ENCODE measurements at regions of chr12 and their contacts with region 1.

Region 1: DNA sequence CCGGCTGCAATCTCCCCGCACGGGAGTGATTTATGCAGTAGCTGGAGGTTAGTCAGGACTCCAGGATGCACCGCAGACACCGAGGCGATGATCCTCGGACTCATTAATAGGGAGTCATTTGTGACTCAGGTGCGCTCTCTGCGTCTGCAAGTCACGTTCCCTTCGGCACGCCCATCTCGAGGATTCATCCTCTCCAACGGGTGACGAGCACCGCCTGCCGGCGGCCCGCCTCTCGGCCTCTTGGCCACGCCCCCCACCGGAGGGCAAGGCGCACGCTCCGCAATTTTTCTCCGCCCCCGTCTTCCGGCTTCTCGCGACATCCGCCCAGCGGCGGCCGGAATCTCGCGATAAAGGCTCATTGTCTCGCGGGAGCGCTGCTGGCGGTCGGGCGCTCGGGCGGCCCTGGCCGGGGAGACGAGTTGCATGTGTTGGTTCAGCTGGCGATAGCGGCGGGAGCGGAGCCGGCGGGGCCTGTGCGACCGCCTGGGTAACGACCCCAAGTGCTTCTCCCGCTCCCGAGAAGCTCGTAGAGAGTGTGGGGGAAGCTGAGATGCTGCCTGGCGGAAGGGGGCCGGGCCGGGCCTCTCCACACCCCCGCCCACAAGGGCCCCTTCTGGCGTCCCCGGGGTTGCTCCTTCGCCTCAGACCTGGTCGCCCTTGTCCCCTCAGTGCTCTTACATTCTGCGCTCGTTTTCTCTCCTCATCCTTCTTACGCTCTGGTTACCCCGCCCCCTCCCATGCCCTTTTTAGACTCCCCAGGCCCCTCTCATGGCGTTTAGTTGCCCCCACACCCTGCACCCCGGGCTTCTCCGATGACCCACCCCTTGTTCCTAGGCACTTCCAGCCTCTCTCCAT is at the start of gene DENR:
- DNase-seq: peak; percentile 98 to 99
- H3K4me3 ChIP-seq: peak within 1 kb of the TSS; percentile 69
- H3K4me3 Mint-ChIP-seq: peak within 1 kb of the TSS; percentile 97
- H3K27ac Mint-ChIP-seq: peak within 1 kb of the TSS; percentile 93
- H3K4me1 ChIP-seq: peaks cover 31% of the 10 kb centered on the region
- H3K4me1 Mint-ChIP-seq: peaks cover 37% of the 10 kb centered on the region
- H3K27me3 ChIP-seq: no peaks in the 10 kb centered on the region
- H3K27me3 Mint-ChIP-seq: no peaks in the 10 kb centered on the region
- CTCF ChIP-seq: peak; percentile 78 to 93
- total RNA-seq, gene DENR: 83.2 and 83.8 TPM in 2 replicates

Region 2: DNA sequence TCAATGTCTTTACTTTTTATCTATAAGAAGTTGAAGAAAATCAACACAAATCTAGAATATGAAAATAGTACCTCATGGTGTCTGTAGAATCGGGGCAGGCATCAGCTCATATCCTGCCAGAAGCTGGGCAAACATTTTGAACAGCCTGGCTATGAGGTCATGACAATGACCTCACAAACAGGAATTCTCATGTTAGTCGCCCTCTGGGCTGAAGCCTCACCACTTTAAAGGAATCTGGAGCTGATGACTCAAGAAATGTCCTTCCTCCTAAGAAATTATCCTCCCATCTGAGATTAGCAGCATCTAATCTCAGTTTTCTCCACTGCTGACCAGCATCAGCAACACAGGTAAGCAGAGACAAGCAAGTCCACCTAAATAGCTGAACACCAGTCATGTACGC is 357.4 kb before region 1 on chr12:
- CTCF ChIA-PET with region 1: no interaction called
- POLR2A ChIA-PET with region 1: no interaction called
- intact Hi-C with region 1: no loop called
- DNase-seq: no peak
- H3K4me3 ChIP-seq: no peak overlapping the region
- H3K4me3 Mint-ChIP-seq: no peak overlapping the region
- H3K27ac Mint-ChIP-seq: peak overlapping the region; percentile 64
- H3K4me1 ChIP-seq: peaks cover 26% of the 10 kb centered on the region
- H3K4me1 Mint-ChIP-seq: peaks cover 16% of the 10 kb centered on the region
- H3K27me3 ChIP-seq: no peaks in the 10 kb centered on the region
- H3K27me3 Mint-ChIP-seq: no peaks in the 10 kb centered on the region
- CTCF ChIP-seq: no peak

Region 3: DNA sequence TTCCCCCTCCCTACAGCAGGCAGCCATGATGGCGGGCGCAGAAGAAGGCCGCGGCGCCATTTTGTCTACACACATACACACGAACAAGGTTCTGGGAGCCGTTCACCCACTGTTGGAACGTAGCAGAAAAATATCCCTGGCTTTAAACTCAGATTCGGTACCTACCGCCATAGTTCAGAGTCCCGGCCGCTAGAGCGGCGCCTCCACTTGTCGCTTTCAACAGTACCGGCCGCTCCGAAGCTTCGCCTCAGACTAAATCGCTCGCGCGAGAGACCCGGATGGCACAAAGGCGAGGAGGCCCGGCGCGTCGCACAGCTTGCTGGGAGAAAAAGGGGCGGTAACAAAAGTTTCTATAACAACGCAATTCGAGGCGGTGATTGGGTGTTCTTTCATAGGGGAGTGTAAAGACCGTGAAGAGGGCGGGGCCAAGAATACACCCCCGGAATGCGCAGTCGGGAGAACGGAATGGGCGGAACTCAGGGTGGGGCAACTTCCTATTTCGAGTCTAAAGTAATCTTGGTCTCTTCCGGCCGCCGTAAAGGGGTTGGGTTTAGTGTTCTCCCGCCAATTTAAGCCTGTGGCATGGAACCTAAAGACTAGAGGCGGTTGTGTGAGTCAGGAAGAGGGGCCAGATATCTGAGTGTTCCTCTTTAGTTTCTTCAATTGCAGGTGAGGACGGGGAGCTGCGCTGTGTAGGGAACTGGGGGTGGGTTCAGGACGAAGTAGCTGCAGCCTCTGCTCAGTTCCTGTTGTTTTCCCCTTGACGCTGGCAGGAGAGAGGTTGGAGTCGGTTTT is 225.8 kb before region 1 on chr12 and contains the starts of genes KNTC1 and RSRC2:
- CTCF ChIA-PET with region 1: no interaction called
- POLR2A ChIA-PET with region 1: no interaction called
- intact Hi-C with region 1: loop called (anchors 2 kb)
- DNase-seq: peak; percentile 98 to 100
- H3K4me3 ChIP-seq: peak within 1 kb of the TSS; percentile 88
- H3K4me3 Mint-ChIP-seq: no peak within 1 kb of the TSS
- H3K27ac Mint-ChIP-seq: no peak within 1 kb of the TSS
- H3K4me1 ChIP-seq: peaks cover 20% of the 10 kb centered on the region
- H3K4me1 Mint-ChIP-seq: peaks cover 8% of the 10 kb centered on the region
- H3K27me3 ChIP-seq: no peaks in the 10 kb centered on the region
- H3K27me3 Mint-ChIP-seq: no peaks in the 10 kb centered on the region
- CTCF ChIP-seq: no peak
- total RNA-seq, gene KNTC1: 55.8 and 57.0 TPM in 2 replicates
- total RNA-seq, gene RSRC2: 77.9 and 79.0 TPM in 2 replicates

Region 4: GRCh38 chr12:122642009-122642408 is 110.7 kb before region 1 on chr12:
- CTCF ChIA-PET with region 1: interaction called, 17 read pairs
- POLR2A ChIA-PET with region 1: no interaction called
- intact Hi-C with region 1: loop called (anchors 1 kb)
- DNase-seq: no peak
- H3K4me3 ChIP-seq: no peak overlapping the region
- H3K4me3 Mint-ChIP-seq: no peak overlapping the region
- H3K27ac Mint-ChIP-seq: no peak overlapping the region
- H3K4me1 ChIP-seq: no peaks in the 10 kb centered on the region
- H3K4me1 Mint-ChIP-seq: no peaks in the 10 kb centered on the region
- H3K27me3 ChIP-seq: no peaks in the 10 kb centered on the region
- H3K27me3 Mint-ChIP-seq: no peaks in the 10 kb centered on the region
- CTCF ChIP-seq: no peak

Region 5: GRCh38 chr12:122681814-122682213 is 70.9 kb before region 1 on chr12:
- CTCF ChIA-PET with region 1: no interaction called
- POLR2A ChIA-PET with region 1: no interaction called
- intact Hi-C with region 1: loop called (anchors 5 kb)
- DNase-seq: no peak
- H3K4me3 ChIP-seq: no peak overlapping the region
- H3K4me3 Mint-ChIP-seq: no peak overlapping the region
- H3K27ac Mint-ChIP-seq: no peak overlapping the region
- H3K4me1 ChIP-seq: peaks cover 15% of the 10 kb centered on the region
- H3K4me1 Mint-ChIP-seq: peaks cover 7% of the 10 kb centered on the region
- H3K27me3 ChIP-seq: no peaks in the 10 kb centered on the region
- H3K27me3 Mint-ChIP-seq: no peaks in the 10 kb centered on the region
- CTCF ChIP-seq: no peak

Region 6: GRCh38 chr12:122726080-122726558 is 26.6 kb before region 1 on chr12:
- CTCF ChIA-PET with region 1: no interaction called
- POLR2A ChIA-PET with region 1: no interaction called
- intact Hi-C with region 1: loop called (anchors 1 kb)
- DNase-seq: peak; percentile 72 to 74
- H3K4me3 ChIP-seq: no peak overlapping the region
- H3K4me3 Mint-ChIP-seq: peak overlapping the region; percentile 62
- H3K27ac Mint-ChIP-seq: peak overlapping the region; percentile 95
- H3K4me1 ChIP-seq: peaks cover 66% of the 10 kb centered on the region
- H3K4me1 Mint-ChIP-seq: peaks cover 10% of the 10 kb centered on the region
- H3K27me3 ChIP-seq: no peaks in the 10 kb centered on the region
- H3K27me3 Mint-ChIP-seq: no peaks in the 10 kb centered on the region
- CTCF ChIP-seq: no peak

Region 7: GRCh38 chr12:123150744-123151456 is 398.2 kb after region 1 on chr12 and contains the start of gene PITPNM2:
- CTCF ChIA-PET with region 1: no interaction called
- POLR2A ChIA-PET with region 1: no interaction called
- intact Hi-C with region 1: no loop called
- DNase-seq: peak in 1 of 2 experiments; percentile 79
- H3K4me3 ChIP-seq: peak within 1 kb of the TSS; percentile 65
- H3K4me3 Mint-ChIP-seq: peak within 1 kb of the TSS; percentile 67
- H3K27ac Mint-ChIP-seq: peak within 1 kb of the TSS; percentile 3
- H3K4me1 ChIP-seq: peaks cover 12% of the 10 kb centered on the region
- H3K4me1 Mint-ChIP-seq: peaks cover 8% of the 10 kb centered on the region
- H3K27me3 ChIP-seq: no peaks in the 10 kb centered on the region
- H3K27me3 Mint-ChIP-seq: no peaks in the 10 kb centered on the region
- CTCF ChIP-seq: no peak
- total RNA-seq, gene PITPNM2: 10.6 TPM in 2 replicates